ENCODE measurements at regions of chr14 and their contacts with region 1.

Region 1: DNA sequence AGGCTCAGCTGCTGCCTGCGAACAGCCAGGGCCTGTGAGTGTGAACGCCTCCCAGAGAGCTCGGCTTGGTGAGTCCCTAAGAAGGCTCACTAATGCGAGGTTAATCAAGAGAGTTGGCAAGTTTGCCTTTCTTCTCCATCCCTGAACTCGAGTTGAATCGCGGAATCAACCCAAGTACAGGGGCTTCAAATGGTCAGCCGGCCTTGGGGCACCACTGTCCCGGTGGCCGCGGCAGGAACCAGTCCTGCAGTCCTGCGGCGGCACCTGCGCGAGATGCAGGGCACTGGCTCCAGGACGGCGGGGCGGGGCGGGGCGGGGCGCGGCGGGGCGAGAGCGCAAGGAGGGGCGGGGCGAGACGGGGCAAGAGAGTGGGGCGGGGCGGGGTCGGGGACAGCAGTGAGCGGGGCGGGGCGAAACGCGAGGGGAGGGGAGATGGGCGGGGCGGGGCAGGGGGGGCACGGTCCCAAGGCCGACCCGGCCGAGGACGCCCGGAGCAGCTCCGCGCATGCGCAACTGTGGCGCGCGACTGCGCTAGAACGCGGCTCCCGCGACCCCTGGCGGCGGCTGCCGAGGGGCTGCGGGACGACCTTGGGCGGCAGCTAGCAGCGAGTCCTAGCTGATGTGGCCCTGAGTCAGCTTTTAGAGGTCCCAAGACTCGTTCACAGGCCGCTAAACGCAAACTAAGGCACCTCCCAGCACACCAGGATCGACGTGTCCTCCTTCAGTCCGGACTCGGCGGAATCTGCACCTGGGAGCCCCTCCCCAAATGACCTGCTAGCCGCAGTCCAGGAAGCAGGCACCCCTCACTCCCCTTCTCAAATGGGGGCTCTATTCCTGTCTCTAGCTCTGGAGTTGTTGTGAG is 58.0 kb downstream of the TTC7B start:
- DNase-seq: peak; percentile 88 to 95 (median 93)
- H3K4me3 ChIP-seq: peak overlapping the region; percentile 58 to 69
- H3K4me3 Mint-ChIP-seq: peak overlapping the region; percentile 86 to 94 (median 88)
- H3K27ac ChIP-seq: peak overlapping the region; percentile 55
- H3K27ac Mint-ChIP-seq: peak overlapping the region; percentile 87 to 96 (median 94)
- H3K4me1 ChIP-seq: peaks cover 18% of the 10 kb centered on the region
- H3K4me1 Mint-ChIP-seq: peaks cover 7 to 23% (median 12%) of the 10 kb centered on the region in 4 donors
- H3K27me3 ChIP-seq: no peaks in the 10 kb centered on the region
- H3K27me3 Mint-ChIP-seq: peaks cover 3 to 5% of the 10 kb centered on the region in 2 donors

Region 2: GRCh38 chr14:90239139-90239538 is 519.1 kb before region 1 on chr14:
- CTCF ChIA-PET with region 1: no interaction called
- POLR2A ChIA-PET with region 1: no interaction called
- intact Hi-C with region 1: no loop called
- DNase-seq: no peak
- H3K4me3 ChIP-seq: no peak overlapping the region
- H3K4me3 Mint-ChIP-seq: no peak overlapping the region
- H3K27ac ChIP-seq: no peak overlapping the region
- H3K27ac Mint-ChIP-seq: no peak overlapping the region
- H3K4me1 ChIP-seq: no peaks in the 10 kb centered on the region
- H3K4me1 Mint-ChIP-seq: peaks cover 0 to 5% (median 0%) of the 10 kb centered on the region in 4 donors
- H3K27me3 ChIP-seq: no peaks in the 10 kb centered on the region
- H3K27me3 Mint-ChIP-seq: peaks cover 11 to 18% of the 10 kb centered on the region in 2 donors

Region 3: DNA sequence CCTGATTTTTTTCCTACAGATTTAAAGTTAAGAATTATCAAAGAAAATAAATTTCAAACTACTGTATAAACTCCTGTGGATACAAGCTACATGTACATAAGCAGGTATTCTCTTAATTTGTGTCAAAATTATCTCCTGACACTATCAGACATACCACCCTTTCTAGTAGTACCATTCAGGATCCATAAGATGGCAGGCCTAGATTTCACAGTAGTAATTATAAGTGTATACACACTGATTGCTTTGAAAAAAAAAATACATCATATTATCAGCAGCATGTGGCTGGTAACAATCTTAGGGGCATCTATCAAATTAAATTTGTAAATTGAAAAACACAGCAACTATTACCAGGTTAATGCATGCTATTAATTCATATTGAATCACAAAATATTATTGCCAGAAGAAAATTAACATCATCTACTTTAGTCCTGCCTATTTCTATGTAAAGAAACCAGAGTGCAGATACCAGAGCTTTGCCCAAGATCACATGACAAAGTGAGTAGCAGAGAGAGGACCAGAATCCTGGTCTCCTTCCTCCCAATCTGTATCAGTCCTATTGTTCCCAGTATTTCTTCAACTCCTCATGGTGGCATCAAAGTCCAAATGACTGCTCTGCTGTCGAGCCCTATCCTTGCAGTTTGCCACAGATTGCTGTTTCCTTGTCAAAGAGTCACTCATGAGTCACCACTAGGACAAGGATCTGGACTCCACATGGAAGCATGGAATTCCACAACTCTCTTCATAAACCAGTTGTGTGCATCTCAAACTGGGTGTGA is 389.1 kb before region 1 on chr14:
- CTCF ChIA-PET with region 1: interaction called, 26 read pairs
- POLR2A ChIA-PET with region 1: no interaction called
- intact Hi-C with region 1: no loop called
- DNase-seq: peak in 4 of 5 donors; percentile 43 to 51 (median 44)
- H3K4me3 ChIP-seq: no peak overlapping the region
- H3K4me3 Mint-ChIP-seq: no peak overlapping the region
- H3K27ac ChIP-seq: no peak overlapping the region
- H3K27ac Mint-ChIP-seq: no peak overlapping the region
- H3K4me1 ChIP-seq: no peaks in the 10 kb centered on the region
- H3K4me1 Mint-ChIP-seq: peaks cover 0 to 2% (median 1%) of the 10 kb centered on the region in 4 donors
- H3K27me3 ChIP-seq: no peaks in the 10 kb centered on the region
- H3K27me3 Mint-ChIP-seq: no peaks in the 10 kb centered on the region

Region 4: DNA sequence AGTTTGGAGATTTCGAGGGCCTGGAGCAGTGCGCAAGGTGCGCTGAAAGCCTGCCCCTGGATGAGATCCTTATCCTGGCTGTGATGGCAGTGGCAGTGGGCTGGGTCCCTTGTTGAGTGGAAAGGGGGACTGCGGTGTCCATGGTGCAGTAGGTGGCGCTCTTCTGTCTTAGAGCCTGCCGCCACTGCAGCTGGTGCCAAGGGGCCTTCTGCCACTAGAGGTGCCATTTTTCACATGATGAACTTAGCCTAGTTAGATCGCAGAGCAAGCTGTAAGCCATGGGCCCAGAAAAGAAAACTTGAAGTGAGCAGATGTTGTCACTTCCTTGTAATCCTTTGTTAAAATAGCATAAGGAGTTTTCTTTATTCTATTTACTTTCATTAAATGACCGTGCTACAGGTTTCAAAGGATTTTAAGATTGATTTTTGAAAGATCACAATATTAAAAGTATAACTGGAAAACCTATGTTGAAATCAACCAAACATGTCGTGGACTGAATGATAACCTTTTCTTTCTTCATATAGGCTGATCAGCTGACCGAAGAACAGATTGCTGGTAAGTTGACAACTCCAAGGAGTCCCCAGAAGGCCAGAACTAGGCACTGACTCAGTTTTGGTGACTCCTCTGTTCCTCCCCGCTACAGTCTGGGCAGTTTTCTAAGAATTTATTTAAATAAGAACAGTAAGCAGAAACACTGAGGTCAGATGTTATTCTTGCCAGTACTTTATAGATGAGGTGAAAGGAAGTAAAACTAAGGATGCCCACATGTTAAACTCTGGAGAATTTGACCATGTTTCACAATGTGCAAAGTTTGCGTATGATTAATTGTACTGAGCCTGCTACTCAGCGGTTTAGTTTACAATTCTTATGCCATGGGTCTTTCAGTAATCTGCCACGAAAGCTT is 358.5 kb before region 1 on chr14:
- CTCF ChIA-PET with region 1: interaction called, 12 read pairs
- POLR2A ChIA-PET with region 1: interaction called, 27 read pairs
- intact Hi-C with region 1: loop called (anchors 1 kb)
- DNase-seq: peak; percentile 83 to 91 (median 87)
- H3K4me3 ChIP-seq: peak overlapping the region; percentile 71 to 88
- H3K4me3 Mint-ChIP-seq: peak overlapping the region; percentile 95 to 99 (median 98)
- H3K27ac ChIP-seq: peak overlapping the region; percentile 87
- H3K27ac Mint-ChIP-seq: peak overlapping the region; percentile 98 to 99 (median 99)
- H3K4me1 ChIP-seq: peaks cover 59% of the 10 kb centered on the region
- H3K4me1 Mint-ChIP-seq: peaks cover 34 to 70% (median 53%) of the 10 kb centered on the region in 4 donors
- H3K27me3 ChIP-seq: no peaks in the 10 kb centered on the region
- H3K27me3 Mint-ChIP-seq: peaks cover 0 to 5% of the 10 kb centered on the region in 2 donors

Region 5: DNA sequence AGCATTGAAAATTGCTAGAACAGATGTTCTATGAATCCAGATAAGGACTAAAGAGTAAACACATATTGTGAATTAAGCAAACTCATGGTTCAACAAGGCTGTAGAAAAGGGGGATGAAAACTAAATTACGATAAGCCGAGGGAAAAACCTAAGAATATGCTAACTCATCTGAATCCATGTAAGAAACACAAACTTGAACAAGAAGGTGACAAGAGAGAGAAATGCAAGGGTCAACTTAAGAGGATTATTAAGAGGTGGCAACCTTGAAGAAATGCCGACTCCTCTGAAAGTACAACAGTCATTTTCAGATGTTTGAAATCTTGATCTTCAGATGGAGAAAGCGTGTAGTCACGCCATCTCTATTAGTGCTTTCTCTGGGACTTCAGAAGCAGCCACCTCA is 70.6 kb before region 1 on chr14:
- CTCF ChIA-PET with region 1: no interaction called
- POLR2A ChIA-PET with region 1: no interaction called
- intact Hi-C with region 1: no loop called
- DNase-seq: no peak
- H3K4me3 ChIP-seq: no peak overlapping the region
- H3K4me3 Mint-ChIP-seq: no peak overlapping the region
- H3K27ac ChIP-seq: no peak overlapping the region
- H3K27ac Mint-ChIP-seq: no peak overlapping the region
- H3K4me1 ChIP-seq: no peaks in the 10 kb centered on the region
- H3K4me1 Mint-ChIP-seq: no peaks in the 10 kb centered on the region
- H3K27me3 ChIP-seq: no peaks in the 10 kb centered on the region
- H3K27me3 Mint-ChIP-seq: peaks cover 0 to 3% of the 10 kb centered on the region in 2 donors

Region 6: GRCh38 chr14:90743425-90743824 is 14.8 kb before region 1 on chr14:
- CTCF ChIA-PET with region 1: interaction called, 12 read pairs
- POLR2A ChIA-PET with region 1: interaction called, 6 read pairs
- intact Hi-C with region 1: no loop called
- DNase-seq: no peak
- H3K4me3 ChIP-seq: no peak overlapping the region
- H3K4me3 Mint-ChIP-seq: no peak overlapping the region
- H3K27ac ChIP-seq: no peak overlapping the region
- H3K27ac Mint-ChIP-seq: peak overlapping the region in 1 of 7 donors; percentile 88
- H3K4me1 ChIP-seq: no peaks in the 10 kb centered on the region
- H3K4me1 Mint-ChIP-seq: no peaks in the 10 kb centered on the region
- H3K27me3 ChIP-seq: no peaks in the 10 kb centered on the region
- H3K27me3 Mint-ChIP-seq: no peaks in the 10 kb centered on the region

Region 7: GRCh38 chr14:92106143-92106926 is 1348.1 kb after region 1 on chr14 and contains the start of gene ATXN3:
- CTCF ChIA-PET with region 1: no interaction called
- POLR2A ChIA-PET with region 1: no interaction called
- intact Hi-C with region 1: loop called (anchors 2 kb)
- DNase-seq: peak; percentile 92 to 98 (median 95)
- H3K4me3 ChIP-seq: peak within 1 kb of the TSS; percentile 80 to 98
- H3K4me3 Mint-ChIP-seq: peak within 1 kb of the TSS; percentile 94 to 100 (median 99)
- H3K27ac ChIP-seq: peak within 1 kb of the TSS; percentile 73
- H3K27ac Mint-ChIP-seq: peak within 1 kb of the TSS; percentile 86 to 97 (median 97)
- H3K4me1 ChIP-seq: peaks cover 55% of the 10 kb centered on the region
- H3K4me1 Mint-ChIP-seq: peaks cover 27 to 55% (median 42%) of the 10 kb centered on the region in 4 donors
- H3K27me3 ChIP-seq: no peaks in the 10 kb centered on the region
- H3K27me3 Mint-ChIP-seq: no peaks in the 10 kb centered on the region
- total RNA-seq, gene ATXN3: 48.9 to 52.4 TPM

Measured in CD4-positive, alpha-beta memory T cell (primary cell).